ENCODE measurements at regions of chr14 and their contacts with region 1.

Region 1: DNA sequence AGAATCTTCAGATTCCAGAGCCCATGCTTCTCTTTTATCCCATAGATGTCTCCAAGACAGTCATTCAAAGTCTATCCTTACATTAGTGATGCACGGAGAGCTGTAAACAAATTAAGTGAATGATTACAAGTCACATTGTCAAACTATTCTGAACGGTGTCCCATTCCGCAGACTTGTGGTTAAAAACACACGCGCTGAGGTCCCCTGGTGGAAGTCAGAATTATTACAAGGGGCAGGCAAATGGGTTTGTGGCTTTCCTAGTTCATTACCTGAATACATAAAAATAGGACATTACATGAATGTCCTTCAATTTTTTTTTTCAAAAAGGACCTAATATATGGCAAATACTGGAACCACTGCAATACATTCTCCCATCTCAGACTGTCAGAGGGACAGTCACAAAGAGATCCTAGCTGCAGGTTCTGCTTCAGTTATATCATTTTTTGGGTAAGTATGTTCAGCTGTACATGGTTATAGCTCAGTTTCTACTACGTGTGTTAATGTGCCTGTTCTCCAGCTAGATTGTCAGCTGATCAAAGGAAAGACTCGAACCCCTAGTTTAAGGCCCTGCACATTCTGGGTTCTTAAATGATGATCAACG is 53.1 kb upstream of the STON2 start:
- DNase-seq: peak; percentile 43
- ATAC-seq: peak; percentile 95
- H3K4me3 ChIP-seq: no peak overlapping the region
- H3K27ac ChIP-seq: no peak overlapping the region
- H3K4me1 ChIP-seq: no peaks in the 10 kb centered on the region
- H3K27me3 ChIP-seq: peaks cover 9% of the 10 kb centered on the region
- CTCF ChIP-seq: peak; percentile 78
- POLR2A ChIP-seq: no peak
- RAD21 ChIP-seq: peak; percentile 64

Region 2: DNA sequence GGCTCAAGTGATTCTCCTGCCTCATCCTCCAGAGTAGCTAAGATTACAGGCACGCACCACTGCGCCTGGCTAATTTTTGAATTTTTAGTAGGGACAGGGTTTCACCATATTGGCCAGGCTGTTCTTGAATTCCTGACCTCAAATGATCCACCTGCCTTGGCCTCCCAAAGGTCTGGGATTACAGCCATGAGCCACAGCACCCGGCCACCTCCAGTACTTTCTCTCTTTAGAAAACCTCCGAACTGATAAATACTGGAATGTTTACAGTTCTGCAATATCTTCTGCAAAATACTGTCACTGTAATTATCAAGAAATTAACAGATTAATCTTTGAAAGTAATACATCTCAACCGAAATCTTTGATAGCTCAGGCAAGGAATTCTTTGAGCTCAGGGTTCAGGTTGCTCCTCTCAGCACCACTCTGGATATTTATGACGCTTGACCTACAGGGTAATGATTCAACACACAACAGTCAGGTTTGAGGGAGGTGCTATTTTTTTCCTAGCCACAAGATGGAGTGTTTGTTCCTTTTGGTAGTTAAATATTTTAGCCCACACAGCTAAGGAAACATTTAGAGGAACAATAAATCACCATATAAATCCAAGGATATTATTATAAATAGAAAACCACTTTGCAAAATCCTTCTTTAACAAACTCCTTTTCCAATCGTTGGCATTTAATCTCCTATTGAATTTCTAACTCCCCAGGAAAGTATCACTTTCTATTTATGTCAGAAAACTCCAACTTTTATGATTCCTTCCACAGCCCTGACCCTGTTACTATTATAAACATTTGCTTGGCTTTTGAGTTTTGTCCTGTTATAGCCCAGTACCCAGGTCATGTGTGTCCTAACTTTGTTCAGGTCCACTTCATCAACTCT is 183.9 kb before region 1 on chr14:
- CTCF ChIA-PET with region 1: interaction called, 12 read pairs
- POLR2A ChIA-PET with region 1: no interaction called
- dilution Hi-C with region 1: no loop called
- in situ Hi-C with region 1: loop called (anchors 5 kb)
- intact Hi-C with region 1: loop called (anchors 1 kb)
- DNase-seq: peak; percentile 68
- ATAC-seq: peak; percentile 98
- H3K4me3 ChIP-seq: no peak overlapping the region
- H3K27ac ChIP-seq: no peak overlapping the region
- H3K4me1 ChIP-seq: no peaks in the 10 kb centered on the region
- H3K27me3 ChIP-seq: no peaks in the 10 kb centered on the region; the same call in 1 of the 2 replicates
- CTCF ChIP-seq: peak; percentile 79
- POLR2A ChIP-seq: no peak
- RAD21 ChIP-seq: peak; percentile 66

Measured in IMR-90 (cell line).